WTC11 (cell line): ENCODE measurements at regions of chr16 and their contacts with region 1.

Region 1: DNA sequence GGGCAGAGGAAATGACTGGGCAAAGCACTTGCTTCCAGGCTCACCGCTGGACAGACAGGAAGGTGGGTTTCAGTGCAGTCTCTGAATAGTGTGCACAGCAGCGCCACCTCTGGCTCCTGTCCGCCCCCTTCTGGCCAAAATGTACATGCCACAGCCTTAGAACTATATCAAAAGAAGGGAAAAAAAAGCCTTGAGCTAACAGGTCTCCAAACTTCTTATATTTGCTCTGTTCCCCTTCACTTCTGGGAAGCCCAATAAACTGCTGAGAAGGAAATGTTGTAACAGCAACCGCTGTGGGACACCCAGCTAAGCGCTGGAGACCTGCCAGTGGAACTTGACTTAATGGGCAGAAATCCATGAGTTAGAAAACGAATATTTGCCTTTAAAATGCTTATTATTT is 17.5 kb downstream of the COG7 start:
- DNase-seq: peak; percentile 83
- ATAC-seq: peak; percentile 94
- H3K4me3 Mint-ChIP-seq: no peak overlapping the region
- H3K27ac Mint-ChIP-seq: no peak overlapping the region
- H3K4me1 Mint-ChIP-seq: no peaks in the 10 kb centered on the region
- H3K27me3 Mint-ChIP-seq: no peaks in the 10 kb centered on the region
- CTCF ChIP-seq: peak; percentile 84

Region 2: GRCh38 chr16:23174622-23175021 is 260.9 kb before region 1 on chr16:
- CTCF ChIA-PET with region 1: interaction called, 54 read pairs
- POLR2A ChIA-PET with region 1: no interaction called
- DNase-seq: no peak
- ATAC-seq: no peak
- H3K4me3 Mint-ChIP-seq: no peak overlapping the region
- H3K27ac Mint-ChIP-seq: no peak overlapping the region
- H3K4me1 Mint-ChIP-seq: peaks cover 3% of the 10 kb centered on the region; the same call in 1 of the 2 replicates
- H3K27me3 Mint-ChIP-seq: peaks cover 6% of the 10 kb centered on the region; the same call in 1 of the 2 replicates
- CTCF ChIP-seq: no peak

Region 3: DNA sequence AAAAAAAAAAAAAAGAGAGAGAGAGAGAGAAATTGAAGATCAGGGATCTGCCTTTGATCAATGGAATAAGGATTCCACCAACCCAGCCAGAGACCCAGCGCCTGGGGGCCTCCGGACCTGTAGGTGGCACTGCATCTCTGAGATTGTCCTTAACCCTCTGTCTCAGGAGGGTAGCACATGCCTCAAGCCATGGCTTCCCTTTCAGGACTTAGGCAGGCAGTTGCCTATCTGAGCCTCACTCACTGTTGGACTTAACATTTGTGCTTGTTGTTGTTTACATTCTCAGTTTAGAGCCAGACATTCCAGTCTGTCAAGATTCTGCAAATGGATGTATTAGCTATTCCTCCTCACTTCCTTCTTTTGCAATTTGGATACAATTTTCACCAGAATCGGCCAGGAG is 138.5 kb before region 1 on chr16:
- CTCF ChIA-PET with region 1: interaction called, 32 read pairs
- POLR2A ChIA-PET with region 1: no interaction called
- DNase-seq: peak; percentile 68
- ATAC-seq: peak; percentile 91
- H3K4me3 Mint-ChIP-seq: no peak overlapping the region
- H3K27ac Mint-ChIP-seq: no peak overlapping the region
- H3K4me1 Mint-ChIP-seq: peaks cover 10% of the 10 kb centered on the region
- H3K27me3 Mint-ChIP-seq: peaks cover 23% of the 10 kb centered on the region
- CTCF ChIP-seq: no peak

Region 4: DNA sequence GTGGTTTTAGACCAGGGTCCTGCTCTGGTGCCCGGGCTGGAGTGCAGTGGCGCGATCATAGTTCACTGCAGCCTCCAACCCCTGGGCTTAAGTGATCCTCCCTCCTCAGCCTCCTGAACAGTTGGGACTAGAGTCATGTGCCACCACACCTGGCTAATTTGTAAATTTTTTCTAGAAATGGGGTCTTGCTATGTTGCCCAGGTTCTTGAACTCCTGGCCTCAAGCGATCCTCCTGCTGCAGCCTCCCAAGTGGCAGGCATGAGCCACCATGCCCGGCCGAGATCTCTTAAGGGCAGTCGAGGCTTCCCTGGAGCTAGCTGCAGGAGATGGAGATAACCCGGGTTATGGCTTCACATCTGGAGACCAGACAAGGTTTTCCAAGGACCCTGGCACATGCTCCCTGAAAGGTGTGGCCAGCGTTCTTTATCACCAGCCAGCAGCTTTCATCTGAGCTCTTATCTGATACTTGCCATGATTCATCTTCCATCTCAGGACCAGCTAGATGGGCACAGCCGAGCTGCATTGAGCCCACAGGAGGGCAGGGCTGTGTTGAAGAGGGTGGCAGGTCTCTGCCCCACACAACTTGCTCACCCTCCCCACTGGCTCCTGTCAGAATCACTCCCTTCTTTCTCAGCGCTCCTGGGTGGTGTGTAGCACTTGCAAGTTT is 104.8 kb before region 1 on chr16:
- CTCF ChIA-PET with region 1: interaction called, 13 read pairs
- POLR2A ChIA-PET with region 1: no interaction called
- DNase-seq: no peak
- ATAC-seq: no peak
- H3K4me3 Mint-ChIP-seq: no peak overlapping the region
- H3K27ac Mint-ChIP-seq: no peak overlapping the region
- H3K4me1 Mint-ChIP-seq: no peaks in the 10 kb centered on the region
- H3K27me3 Mint-ChIP-seq: no peaks in the 10 kb centered on the region
- CTCF ChIP-seq: no peak

Region 5: GRCh38 chr16:23371368-23371767 is 64.1 kb before region 1 on chr16:
- CTCF ChIA-PET with region 1: interaction called, 16 read pairs
- POLR2A ChIA-PET with region 1: no interaction called
- DNase-seq: peak; percentile 32
- ATAC-seq: peak; percentile 38; the same call in 1 of the 2 replicates
- H3K4me3 Mint-ChIP-seq: no peak overlapping the region
- H3K27ac Mint-ChIP-seq: no peak overlapping the region
- H3K4me1 Mint-ChIP-seq: no peaks in the 10 kb centered on the region
- H3K27me3 Mint-ChIP-seq: no peaks in the 10 kb centered on the region
- CTCF ChIP-seq: peak; percentile 47; the same call in 1 of the 2 replicates

Region 6: DNA sequence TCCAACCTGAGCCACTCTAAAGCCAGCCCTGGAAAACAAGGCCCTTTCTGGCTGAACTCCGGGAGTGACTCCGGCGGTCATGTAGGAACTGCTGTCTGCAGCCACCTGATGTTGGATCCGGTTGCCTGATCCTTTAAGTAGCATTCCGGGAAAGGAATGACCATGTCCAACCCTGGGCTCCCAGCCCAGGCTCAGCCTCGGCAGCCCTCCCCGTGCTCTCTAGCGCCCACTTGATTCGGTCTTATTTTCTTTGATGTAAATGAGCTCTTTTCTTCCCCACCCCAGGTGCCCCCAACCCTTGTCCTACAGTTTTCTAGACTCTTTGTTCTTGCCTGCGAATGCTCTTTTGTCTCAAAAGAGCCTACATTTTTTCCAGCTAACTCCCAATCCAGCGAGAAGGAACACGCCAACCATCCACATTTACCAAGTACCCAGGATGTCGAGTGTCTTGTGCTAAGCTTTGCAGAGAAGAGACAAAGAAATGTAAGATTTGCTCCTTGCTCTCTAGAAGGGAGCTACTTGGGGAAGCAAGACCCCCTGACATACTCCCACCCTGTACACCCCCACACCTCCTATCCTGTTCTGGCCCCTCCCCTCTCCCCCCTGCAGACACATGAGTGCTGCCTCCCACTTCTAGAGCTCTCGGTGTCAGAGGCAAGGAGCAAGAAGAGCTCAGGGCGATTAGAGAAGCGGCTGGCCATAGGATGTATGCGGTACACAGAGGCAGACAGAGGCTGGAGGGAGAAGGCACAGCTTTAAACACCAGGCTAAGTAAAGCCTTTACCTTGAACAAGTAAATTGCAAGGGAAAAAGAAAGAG is 36.3 kb before region 1 on chr16:
- CTCF ChIA-PET with region 1: interaction called, 40 read pairs
- POLR2A ChIA-PET with region 1: interaction called, 3 read pairs
- DNase-seq: peak; percentile 82
- ATAC-seq: peak; percentile 95
- H3K4me3 Mint-ChIP-seq: peak overlapping the region; percentile 48
- H3K27ac Mint-ChIP-seq: peak overlapping the region; percentile 89
- H3K4me1 Mint-ChIP-seq: peaks cover 33% of the 10 kb centered on the region
- H3K27me3 Mint-ChIP-seq: no peaks in the 10 kb centered on the region
- CTCF ChIP-seq: no peak

Region 7: DNA sequence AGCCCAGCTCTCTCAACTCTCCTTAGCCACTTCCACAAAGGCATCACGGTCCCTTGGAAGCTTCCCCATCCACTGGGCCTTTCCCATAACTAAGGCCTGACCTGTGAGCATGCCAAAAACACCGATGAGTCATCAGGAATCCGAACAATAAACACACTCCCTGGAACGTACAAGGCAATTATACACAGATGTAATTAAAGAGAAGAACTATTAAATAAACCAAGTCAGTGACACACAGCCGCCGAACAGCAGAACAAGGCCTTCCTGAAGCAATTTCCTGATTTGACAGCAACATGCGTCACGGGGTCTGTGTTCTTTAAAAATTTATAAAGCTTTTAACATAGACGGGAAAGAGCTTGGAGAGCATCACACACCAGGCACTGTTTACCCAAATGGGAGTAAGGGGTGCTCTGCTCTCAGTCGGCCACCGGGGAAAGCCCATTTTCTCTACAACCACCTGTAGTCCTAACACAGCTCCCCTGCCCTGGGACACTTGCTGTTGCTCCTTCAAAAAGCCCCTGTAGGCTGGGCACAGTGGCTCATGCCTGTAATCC is 11.9 kb before region 1 on chr16:
- CTCF ChIA-PET with region 1: interaction called, 40 read pairs
- POLR2A ChIA-PET with region 1: no interaction called
- DNase-seq: no peak
- ATAC-seq: peak; percentile 66
- H3K4me3 Mint-ChIP-seq: no peak overlapping the region
- H3K27ac Mint-ChIP-seq: peak overlapping the region; percentile 46
- H3K4me1 Mint-ChIP-seq: peaks cover 12% of the 10 kb centered on the region
- H3K27me3 Mint-ChIP-seq: no peaks in the 10 kb centered on the region
- CTCF ChIP-seq: no peak